ENCODE measurements at regions of chr10 and their contacts with region 1.

Region 1: DNA sequence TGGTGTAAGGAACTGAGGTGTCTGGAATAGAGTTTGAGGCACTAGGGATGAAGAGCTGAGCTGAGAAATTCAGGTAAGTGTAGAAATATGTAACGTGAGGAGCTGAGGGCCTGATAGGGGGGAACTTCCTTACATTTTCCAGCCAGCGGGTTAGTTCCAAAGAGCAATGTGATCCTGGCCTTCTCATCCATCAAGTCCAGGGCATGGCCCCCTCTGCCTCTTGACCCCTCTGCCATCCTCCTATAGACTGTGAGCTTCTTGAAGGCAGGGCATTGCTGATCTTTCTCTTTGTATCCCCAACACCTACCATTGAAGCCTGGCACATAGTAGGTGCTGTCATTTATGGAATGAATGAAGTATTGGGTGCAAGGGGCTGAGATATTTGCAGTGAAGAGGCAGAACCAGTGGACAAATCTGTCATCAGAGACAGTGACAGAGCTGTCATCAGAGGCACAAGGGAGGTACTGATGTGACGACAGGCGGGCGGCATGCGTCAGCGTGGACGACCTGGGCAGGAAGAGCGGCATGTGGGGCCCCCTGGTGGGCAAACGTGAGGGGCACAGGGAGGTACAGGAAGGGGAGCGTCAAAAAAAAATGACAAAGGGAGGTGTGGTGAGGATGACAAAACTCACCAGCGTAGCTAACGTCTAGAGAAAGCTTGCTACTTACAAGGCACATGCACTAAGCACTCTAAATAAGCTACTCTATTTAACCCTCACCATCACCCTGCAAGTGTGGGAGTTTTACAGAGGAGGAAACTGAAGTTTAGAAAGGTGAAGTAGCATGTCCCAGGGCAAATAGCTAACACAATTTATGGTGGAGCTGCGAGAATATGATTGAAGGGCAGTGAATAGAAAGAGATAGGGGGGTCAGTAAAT is 5.2 kb upstream of the CAMK2G start:
- DNase-seq: peak; percentile 84
- CTCF ChIP-seq: peak; percentile 97

Region 2: DNA sequence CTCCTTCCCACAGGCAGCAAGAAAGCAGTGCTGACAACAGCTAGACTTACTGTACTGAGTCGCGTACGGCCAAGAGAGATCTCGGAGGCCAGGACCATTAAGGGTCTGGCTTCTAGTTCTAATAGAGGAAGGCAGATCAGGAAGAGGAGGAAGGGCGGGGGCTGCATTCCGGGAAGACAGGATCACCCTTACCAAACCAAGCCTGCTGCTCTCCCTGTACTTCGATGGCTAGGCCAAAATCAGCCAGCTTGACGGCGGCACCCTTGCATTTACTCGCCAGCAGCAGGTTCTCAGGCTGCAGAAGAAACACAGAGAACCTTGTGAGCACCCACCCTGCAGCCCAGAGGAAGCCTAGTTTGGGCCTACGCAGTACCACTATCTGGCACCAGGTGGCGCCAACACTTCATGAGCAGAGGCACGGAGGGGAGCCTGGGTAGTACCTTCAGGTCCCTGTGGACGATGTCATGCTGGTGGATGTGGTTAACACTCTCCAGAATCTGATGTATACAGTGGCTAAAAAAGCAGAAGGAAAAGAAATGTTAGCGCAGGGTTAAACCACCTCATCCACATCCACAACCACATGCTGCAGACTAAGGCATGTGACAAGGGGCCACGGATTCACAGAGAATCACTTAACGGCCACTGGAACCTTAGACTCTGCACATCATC is 30.6 kb before region 1 on chr10:
- in situ Hi-C with region 1: loop called (anchors 5 kb)
- DNase-seq: peak; percentile 93
- CTCF ChIP-seq: peak; percentile 98

Region 3: DNA sequence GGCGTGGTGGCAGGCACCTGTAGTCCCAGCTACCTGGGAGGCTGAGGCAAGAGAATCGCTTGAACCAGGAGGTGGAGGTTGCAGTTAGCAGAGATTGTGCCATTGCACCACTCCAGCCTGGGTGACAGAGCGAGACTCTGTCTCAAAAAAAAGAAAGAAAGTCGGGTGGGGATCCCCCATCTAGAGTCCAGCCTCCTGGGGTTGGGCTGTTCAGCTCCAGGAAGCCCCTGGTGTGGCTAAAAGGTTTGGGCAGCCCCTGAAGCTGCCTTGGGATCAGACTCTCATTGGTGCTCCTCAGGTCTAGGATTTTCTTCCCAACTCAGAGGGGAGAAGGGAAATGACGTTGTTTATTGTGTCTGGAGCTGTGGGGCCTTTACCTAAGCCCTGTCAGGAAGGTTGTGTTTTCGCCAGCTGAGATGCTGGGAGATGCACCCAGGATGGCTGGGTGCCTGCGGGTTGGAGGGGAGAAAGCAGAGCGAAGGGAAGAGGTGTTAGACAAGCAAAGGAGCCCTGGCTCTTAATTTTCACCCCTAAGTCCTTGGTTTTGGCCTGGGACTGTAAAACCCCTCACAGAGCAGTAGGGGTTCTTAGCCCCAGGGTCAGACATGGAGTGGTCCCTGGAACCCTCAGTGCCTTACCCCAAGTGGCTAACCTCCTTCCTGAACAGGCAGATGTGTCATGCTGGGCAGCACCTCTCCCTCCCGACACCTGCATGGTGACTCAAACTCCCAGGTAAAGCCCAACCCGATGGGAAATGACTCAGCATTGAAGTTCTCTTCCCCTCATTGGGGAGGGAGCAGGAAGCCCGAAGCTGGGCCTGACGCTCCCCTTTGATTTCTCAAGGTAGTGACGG is 52.5 kb after region 1 on chr10:
- in situ Hi-C with region 1: loop called (anchors 10 kb)
- DNase-seq: peak; percentile 73
- CTCF ChIP-seq: no peak

Region 4: GRCh38 chr10:74081192-74081803 is 201.8 kb after region 1 on chr10:
- in situ Hi-C with region 1: loop called (anchors 10 kb)
- DNase-seq: peak; percentile 37
- CTCF ChIP-seq: peak; percentile 66

Region 5: DNA sequence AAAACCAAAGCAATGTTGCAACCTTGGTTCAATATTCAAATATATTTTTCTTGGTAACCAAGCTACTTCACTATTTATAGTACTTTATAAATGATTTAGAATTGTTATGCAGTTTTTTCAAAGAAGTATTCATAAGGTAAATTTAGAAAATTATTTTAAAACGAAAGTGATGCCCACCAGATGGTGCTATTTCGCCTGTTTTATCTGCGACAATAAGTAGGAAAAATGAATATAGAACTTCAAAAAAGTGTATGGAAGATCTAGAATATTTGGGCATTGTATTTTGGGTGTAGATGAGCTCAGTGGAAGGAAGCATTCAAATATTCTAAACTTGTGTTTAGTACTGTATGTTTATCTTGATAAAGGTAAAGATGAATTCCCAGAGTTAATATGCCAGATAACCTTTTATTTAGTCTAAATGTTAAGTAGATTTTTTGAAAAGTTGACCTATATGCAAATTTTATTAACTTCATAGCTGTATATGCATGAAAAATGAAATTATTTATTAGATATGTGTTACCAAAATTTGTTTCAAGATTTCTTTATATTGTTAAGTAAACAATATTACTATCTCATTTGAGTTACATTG is 364.7 kb after region 1 on chr10:
- in situ Hi-C with region 1: loop called (anchors 25 kb)
- DNase-seq: no peak
- CTCF ChIP-seq: peak; percentile 46

Region 6: DNA sequence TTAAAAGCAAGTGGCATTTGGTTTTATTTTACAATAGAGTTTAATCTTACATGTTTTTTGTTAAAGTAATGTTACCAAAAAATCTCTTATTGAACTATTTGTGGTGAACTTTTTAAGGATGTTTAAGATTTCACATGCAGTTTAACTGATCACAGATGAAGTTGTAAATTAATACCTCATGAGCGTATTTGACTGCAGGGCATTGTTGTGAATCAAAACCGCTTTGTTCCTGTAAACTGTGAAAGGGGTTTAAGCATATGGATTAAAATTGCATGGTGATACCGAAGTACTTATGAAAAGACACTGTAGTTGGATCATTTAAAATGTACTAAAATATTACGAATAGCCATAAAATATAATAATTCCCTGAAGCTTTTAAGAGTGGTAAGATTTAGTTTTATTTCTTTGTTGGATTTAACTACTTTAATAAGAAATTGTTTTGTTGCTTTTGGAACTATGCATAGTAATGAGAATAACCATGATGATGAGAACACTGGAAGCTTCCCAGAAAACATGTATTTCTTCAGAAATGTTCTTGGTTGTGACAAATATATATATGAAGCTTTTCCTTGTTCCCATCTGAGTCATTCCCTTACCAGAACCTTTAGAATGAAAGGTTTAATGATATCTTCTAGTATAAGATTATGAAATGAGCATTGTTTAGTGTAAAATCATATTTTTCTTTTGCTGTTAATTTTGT is 402.8 kb after region 1 on chr10:
- in situ Hi-C with region 1: no loop called
- DNase-seq: no peak
- CTCF ChIP-seq: no peak